ENCODE measurements at regions of chr7 and their contacts with region 1.

Region 1: GRCh38 chr7:124152859-124153692 is 120.2 kb upstream of the TMEM229A start:
- DNase-seq: peak; percentile 9
- H3K4me3 ChIP-seq: no peak overlapping the region
- H3K27ac ChIP-seq: no peak overlapping the region
- H3K4me1 ChIP-seq: no peaks in the 10 kb centered on the region
- CTCF ChIP-seq: peak; percentile 60

Region 2: DNA sequence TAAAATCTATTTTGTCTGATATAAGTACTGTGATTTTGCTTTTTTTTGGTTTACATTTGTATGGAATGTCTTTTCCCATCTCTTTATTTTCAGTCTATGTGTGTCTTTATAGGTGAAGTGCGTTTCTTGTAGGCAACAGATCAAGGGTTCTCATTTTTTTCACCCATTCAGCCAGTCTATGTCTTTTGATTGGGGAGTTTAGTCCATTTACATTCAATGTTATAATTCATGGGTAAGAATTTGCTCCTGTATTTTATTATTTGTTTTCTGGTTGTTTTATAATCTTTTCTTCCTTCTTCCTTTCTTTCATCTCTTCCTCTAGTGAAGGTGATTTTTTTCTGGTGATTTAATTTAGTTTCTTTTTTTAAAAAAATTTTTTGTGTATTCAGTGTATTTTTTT is 15.4 kb before region 1 on chr7:
- CTCF ChIA-PET with region 1: no interaction called
- POLR2A ChIA-PET with region 1: no interaction called
- intact Hi-C with region 1: no loop called
- DNase-seq: no peak
- H3K4me3 ChIP-seq: no peak overlapping the region
- H3K27ac ChIP-seq: no peak overlapping the region
- H3K4me1 ChIP-seq: no peaks in the 10 kb centered on the region
- CTCF ChIP-seq: no peak

Region 3: GRCh38 chr7:124784879-124785818 is 632.1 kb after region 1 on chr7:
- CTCF ChIA-PET with region 1: no interaction called
- POLR2A ChIA-PET with region 1: no interaction called
- intact Hi-C with region 1: loop called (anchors 10 kb)
- DNase-seq: peak; percentile 38
- H3K4me3 ChIP-seq: no peak overlapping the region
- H3K27ac ChIP-seq: no peak overlapping the region
- H3K4me1 ChIP-seq: no peaks in the 10 kb centered on the region
- CTCF ChIP-seq: peak; percentile 87

Region 4: GRCh38 chr7:124856299-124856888 is 703.3 kb after region 1 on chr7:
- CTCF ChIA-PET with region 1: no interaction called
- POLR2A ChIA-PET with region 1: no interaction called
- intact Hi-C with region 1: loop called (anchors 10 kb)
- DNase-seq: peak; percentile 37
- H3K4me3 ChIP-seq: no peak overlapping the region
- H3K27ac ChIP-seq: no peak overlapping the region
- H3K4me1 ChIP-seq: no peaks in the 10 kb centered on the region
- CTCF ChIP-seq: peak; percentile 86